ENCODE measurements at regions of chr17 and their contacts with region 1.

Region 1: DNA sequence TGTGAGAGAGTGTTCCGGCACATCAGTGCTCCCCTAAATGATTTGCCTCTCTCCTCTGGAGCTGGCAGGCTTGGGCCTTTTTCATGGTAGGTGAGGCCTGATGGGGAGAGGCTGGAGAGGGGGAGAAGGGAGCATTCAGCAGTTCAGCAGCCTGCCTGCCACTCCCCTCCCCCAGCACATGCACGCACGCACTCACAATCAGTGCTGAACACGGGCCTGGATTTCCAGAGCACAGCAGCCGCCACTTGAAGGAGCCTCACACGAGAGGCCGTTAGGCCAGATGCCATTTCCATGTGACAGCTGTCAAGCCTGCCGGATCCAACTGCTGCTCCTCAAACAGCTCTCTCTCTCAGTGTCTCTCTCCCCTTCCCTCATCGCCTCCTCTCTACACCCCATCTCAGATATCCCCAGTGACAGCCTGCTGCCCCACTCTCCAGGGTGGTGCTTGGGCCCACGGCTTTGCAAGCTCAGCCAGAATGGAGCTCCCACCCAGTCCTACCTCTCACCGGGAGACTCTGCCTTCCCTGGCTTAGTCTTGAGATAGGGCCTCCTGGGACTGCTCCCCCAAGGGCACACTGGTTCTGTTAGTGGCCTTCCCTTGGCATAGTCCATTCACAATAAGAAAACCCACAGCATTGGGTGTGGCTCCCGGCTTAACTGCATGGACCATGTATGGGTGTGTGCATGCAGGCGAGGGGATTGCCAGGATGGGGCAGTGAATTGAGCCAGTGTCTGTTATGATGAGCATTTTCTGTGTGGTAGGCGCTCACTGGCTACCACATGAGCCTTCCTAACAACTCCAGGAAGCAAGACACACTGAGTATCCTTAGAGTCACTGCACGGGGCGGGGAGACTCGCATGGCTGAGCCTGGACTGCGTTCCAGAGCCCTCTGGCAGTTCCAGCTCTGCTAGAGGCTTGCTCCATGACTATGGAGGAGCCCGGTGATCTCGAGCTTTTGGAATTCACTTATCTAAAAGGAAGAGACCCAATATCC is 226.2 kb downstream of the CCDC182 start:
- DNase-seq: no peak
- ATAC-seq: peak; percentile 77

Region 2: GRCh38 chr17:57486873-57487301 is 32.0 kb before region 1 on chr17:
- intact Hi-C with region 1: loop called (anchors 2 kb)
- DNase-seq: no peak
- ATAC-seq: peak; percentile 30

Measured in Right ventricle myocardium inferior (tissue), 1 donor.